ENCODE measurements at regions of chr4 and their contacts with region 1.

Region 1: GRCh38 chr4:77862478-77863216 is at the start of gene MRPL1:
- DNase-seq: peak; percentile 90 to 95 (median 93)
- H3K4me3 ChIP-seq: peak within 1 kb of the TSS; percentile 74 to 99
- H3K4me3 Mint-ChIP-seq: peak within 1 kb of the TSS; percentile 92 to 98 (median 95)
- H3K27ac ChIP-seq: peak within 1 kb of the TSS; percentile 99
- H3K27ac Mint-ChIP-seq: peak within 1 kb of the TSS; percentile 96 to 100 (median 99)
- H3K4me1 ChIP-seq: peaks cover 56% of the 10 kb centered on the region
- H3K4me1 Mint-ChIP-seq: peaks cover 32 to 70% (median 50%) of the 10 kb centered on the region in 4 donors
- H3K27me3 ChIP-seq: no peaks in the 10 kb centered on the region
- H3K27me3 Mint-ChIP-seq: peaks cover 0 to 7% of the 10 kb centered on the region in 2 donors
- total RNA-seq, gene MRPL1: 18.6 to 23.3 TPM

Region 2: GRCh38 chr4:76148142-76148865 is 1714.3 kb before region 1 on chr4 and contains the start of gene NUP54:
- CTCF ChIA-PET with region 1: no interaction called
- POLR2A ChIA-PET with region 1: interaction called, 5 read pairs
- intact Hi-C with region 1: loop called (anchors 5 kb)
- DNase-seq: peak; percentile 92 to 94 (median 93)
- H3K4me3 ChIP-seq: peak within 1 kb of the TSS; percentile 54 to 88
- H3K4me3 Mint-ChIP-seq: peak within 1 kb of the TSS; percentile 92 to 100 (median 98)
- H3K27ac ChIP-seq: peak within 1 kb of the TSS; percentile 88
- H3K27ac Mint-ChIP-seq: peak within 1 kb of the TSS; percentile 84 to 100 (median 98)
- H3K4me1 ChIP-seq: peaks cover 34% of the 10 kb centered on the region
- H3K4me1 Mint-ChIP-seq: peaks cover 21 to 46% (median 34%) of the 10 kb centered on the region in 4 donors
- H3K27me3 ChIP-seq: no peaks in the 10 kb centered on the region
- H3K27me3 Mint-ChIP-seq: no peaks in the 10 kb centered on the region
- total RNA-seq, gene NUP54: 49.3 to 52.8 TPM

Region 3: DNA sequence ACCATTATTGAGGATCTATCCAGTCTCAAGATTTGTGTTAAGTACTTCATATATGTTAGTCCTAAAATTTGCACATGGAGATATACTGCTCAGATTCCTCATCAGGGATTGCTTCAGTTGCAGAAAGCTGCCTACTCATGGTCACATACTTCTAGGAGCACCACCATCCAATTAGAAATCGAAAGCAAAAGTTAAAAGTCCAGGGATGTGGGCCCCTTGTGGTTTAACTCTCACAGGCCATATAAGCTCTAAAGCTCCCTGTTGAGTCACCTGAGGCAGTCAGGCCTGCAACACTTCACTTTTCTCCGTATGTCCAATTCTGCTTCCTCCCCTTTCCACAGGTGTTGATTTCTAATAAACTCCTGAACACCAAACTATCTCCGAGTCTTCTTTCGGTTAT is 127.7 kb before region 1 on chr4:
- CTCF ChIA-PET with region 1: no interaction called
- POLR2A ChIA-PET with region 1: interaction called, 8 read pairs
- intact Hi-C with region 1: loop called (anchors 5 kb)
- DNase-seq: peak; percentile 34 to 66 (median 43)
- H3K4me3 ChIP-seq: no peak overlapping the region
- H3K4me3 Mint-ChIP-seq: peak overlapping the region in 7 of 8 donors; percentile 56 to 87 (median 77)
- H3K27ac ChIP-seq: peak overlapping the region; percentile 23
- H3K27ac Mint-ChIP-seq: peak overlapping the region; percentile 51 to 90 (median 80)
- H3K4me1 ChIP-seq: peaks cover 37% of the 10 kb centered on the region
- H3K4me1 Mint-ChIP-seq: peaks cover 44 to 69% (median 46%) of the 10 kb centered on the region in 4 donors
- H3K27me3 ChIP-seq: no peaks in the 10 kb centered on the region
- H3K27me3 Mint-ChIP-seq: no peaks in the 10 kb centered on the region

Region 4: GRCh38 chr4:77777135-77777807 is 85.4 kb before region 1 on chr4:
- CTCF ChIA-PET with region 1: no interaction called
- POLR2A ChIA-PET with region 1: interaction called, 26 read pairs
- intact Hi-C with region 1: loop called (anchors 5 kb)
- DNase-seq: no peak
- H3K4me3 ChIP-seq: no peak overlapping the region
- H3K4me3 Mint-ChIP-seq: peak overlapping the region in 5 of 8 donors; percentile 15 to 40 (median 31)
- H3K27ac ChIP-seq: no peak overlapping the region
- H3K27ac Mint-ChIP-seq: peak overlapping the region in 5 of 7 donors; percentile 5 to 82 (median 40)
- H3K4me1 ChIP-seq: peaks cover 42% of the 10 kb centered on the region
- H3K4me1 Mint-ChIP-seq: peaks cover 41 to 61% (median 47%) of the 10 kb centered on the region in 4 donors
- H3K27me3 ChIP-seq: no peaks in the 10 kb centered on the region
- H3K27me3 Mint-ChIP-seq: no peaks in the 10 kb centered on the region

Region 5: GRCh38 chr4:77800483-77801259 is 62.0 kb before region 1 on chr4:
- CTCF ChIA-PET with region 1: interaction called, 26 read pairs
- POLR2A ChIA-PET with region 1: interaction called, 43 read pairs
- intact Hi-C with region 1: loop called (anchors 1 kb)
- DNase-seq: no peak
- H3K4me3 ChIP-seq: peak overlapping the region in 1 of 2 donors; percentile 21
- H3K4me3 Mint-ChIP-seq: peak overlapping the region; percentile 59 to 84 (median 80)
- H3K27ac ChIP-seq: peak overlapping the region; percentile 49
- H3K27ac Mint-ChIP-seq: peak overlapping the region; percentile 18 to 90 (median 62)
- H3K4me1 ChIP-seq: peaks cover 95% of the 10 kb centered on the region
- H3K4me1 Mint-ChIP-seq: peaks cover 47 to 92% (median 67%) of the 10 kb centered on the region in 4 donors
- H3K27me3 ChIP-seq: no peaks in the 10 kb centered on the region
- H3K27me3 Mint-ChIP-seq: no peaks in the 10 kb centered on the region

Region 6: DNA sequence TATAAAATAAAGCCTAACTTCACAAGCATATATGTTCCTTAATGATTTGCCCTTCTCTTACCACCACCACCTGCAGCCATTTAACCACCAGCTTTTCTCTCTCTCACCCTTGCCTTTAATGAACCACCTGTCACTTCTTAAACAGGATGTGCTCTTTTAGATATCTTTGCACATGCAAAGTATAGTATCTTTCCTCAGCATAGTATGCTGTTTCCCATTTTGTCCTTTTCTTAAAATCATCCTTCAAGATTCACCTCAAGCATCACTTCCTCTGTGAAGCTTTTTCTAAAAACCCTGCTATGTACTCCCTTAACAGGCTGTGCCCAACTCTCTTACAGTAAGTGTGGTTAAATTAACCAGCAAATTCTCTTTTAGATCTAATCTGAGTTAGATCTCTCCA is 35.3 kb before region 1 on chr4:
- CTCF ChIA-PET with region 1: interaction called, 27 read pairs
- POLR2A ChIA-PET with region 1: interaction called, 908 read pairs
- intact Hi-C with region 1: no loop called
- DNase-seq: peak in 4 of 5 donors; percentile 44 to 62 (median 54)
- H3K4me3 ChIP-seq: peak overlapping the region in 1 of 2 donors; percentile 8
- H3K4me3 Mint-ChIP-seq: peak overlapping the region in 7 of 8 donors; percentile 23 to 68 (median 43)
- H3K27ac ChIP-seq: peak overlapping the region; percentile 11
- H3K27ac Mint-ChIP-seq: peak overlapping the region; percentile 39 to 93 (median 86)
- H3K4me1 ChIP-seq: peaks cover 59% of the 10 kb centered on the region
- H3K4me1 Mint-ChIP-seq: peaks cover 25 to 59% (median 41%) of the 10 kb centered on the region in 4 donors
- H3K27me3 ChIP-seq: no peaks in the 10 kb centered on the region
- H3K27me3 Mint-ChIP-seq: no peaks in the 10 kb centered on the region

Region 7: DNA sequence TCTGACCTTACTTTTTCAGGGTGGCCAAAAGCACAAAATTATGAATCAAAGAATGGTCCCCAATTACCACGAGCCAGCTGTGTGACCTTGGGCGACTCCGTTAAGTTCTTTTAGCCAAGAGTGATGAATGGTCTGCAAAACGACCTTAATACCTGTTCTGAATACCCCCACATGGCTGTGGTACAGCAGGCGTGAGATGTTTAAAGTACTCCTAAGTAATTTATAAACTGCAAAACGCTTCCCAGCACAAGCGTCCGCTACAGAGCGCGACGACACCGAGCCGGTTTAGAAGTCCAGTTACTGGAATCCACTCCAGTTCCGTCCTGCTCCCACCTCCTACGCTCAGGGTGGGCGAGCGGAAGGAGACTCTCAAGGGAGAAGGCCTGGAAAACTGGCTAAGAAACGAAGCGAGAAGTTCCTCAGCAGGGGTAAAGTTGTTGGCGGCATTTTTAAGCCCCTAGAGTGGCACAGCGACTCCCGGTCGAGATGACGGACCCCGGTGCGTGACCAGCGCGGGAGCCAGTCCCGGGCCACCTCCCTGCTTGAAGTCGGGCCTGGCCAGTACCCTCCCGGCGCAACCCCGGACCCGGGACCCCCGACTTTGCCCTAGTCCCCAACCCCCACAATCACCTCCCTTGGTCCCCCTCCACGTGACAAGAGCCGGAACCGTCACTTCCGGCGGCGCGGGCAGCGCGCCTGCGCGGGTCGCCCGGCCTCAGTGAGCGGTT is 912.8 kb after region 1 on chr4:
- CTCF ChIA-PET with region 1: no interaction called
- POLR2A ChIA-PET with region 1: interaction called, 3 read pairs
- intact Hi-C with region 1: loop called (anchors 5 kb)
- DNase-seq: peak; percentile 83 to 90 (median 89)
- H3K4me3 ChIP-seq: peak overlapping the region; percentile 79 to 91
- H3K4me3 Mint-ChIP-seq: peak overlapping the region; percentile 93 to 96 (median 95)
- H3K27ac ChIP-seq: peak overlapping the region; percentile 77
- H3K27ac Mint-ChIP-seq: peak overlapping the region; percentile 92 to 98 (median 96)
- H3K4me1 ChIP-seq: peaks cover 13% of the 10 kb centered on the region
- H3K4me1 Mint-ChIP-seq: peaks cover 12 to 22% (median 15%) of the 10 kb centered on the region in 4 donors
- H3K27me3 ChIP-seq: no peaks in the 10 kb centered on the region
- H3K27me3 Mint-ChIP-seq: no peaks in the 10 kb centered on the region